ENCODE measurements at regions of chr12 and their contacts with region 1.

Region 1: DNA sequence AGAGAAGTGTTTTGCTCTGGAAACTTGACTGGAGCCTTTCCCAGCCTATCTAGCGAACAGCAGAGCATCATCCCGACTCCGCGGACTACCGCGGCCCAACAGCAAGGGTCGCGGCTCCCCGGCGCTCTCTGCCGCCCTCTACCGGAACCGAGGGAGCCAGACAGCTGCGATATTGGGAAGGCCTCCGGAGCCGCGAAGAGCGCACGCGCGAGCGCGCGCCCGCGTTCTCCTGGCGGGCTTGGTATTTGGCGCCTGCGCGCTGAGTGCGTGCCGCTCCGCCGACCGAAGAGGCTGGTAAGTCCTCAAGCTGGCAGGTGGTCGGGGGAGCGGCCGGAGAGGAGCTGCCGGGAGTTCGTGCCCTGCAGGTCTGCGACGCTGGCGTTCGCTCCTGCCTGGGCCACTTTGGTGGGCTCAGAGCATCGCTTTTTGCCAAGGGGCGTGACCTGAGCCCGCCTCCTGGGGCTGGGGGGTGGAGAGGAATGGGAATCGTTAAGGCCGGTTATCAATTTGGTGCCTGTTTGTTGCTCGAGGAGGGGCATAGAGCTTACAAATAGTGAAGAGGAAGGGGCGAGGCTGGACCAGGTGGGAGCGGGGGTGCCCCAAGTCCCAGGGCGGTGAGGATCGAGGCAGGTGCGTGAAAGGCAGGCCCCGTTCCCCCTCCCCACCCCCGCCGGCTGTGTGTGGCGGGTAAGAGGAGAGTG is at the start of gene TMEM106C:
- DNase-seq: peak; percentile 84 to 97 (median 90)
- ATAC-seq: peak; percentile 97
- H3K4me3 ChIP-seq: peak within 1 kb of the TSS; percentile 85
- H3K4me3 Mint-ChIP-seq: peak within 1 kb of the TSS; percentile 95
- H3K27ac ChIP-seq: no peak within 1 kb of the TSS
- H3K27ac Mint-ChIP-seq: peak within 1 kb of the TSS; percentile 81
- H3K4me1 ChIP-seq: peaks cover 17% of the 10 kb centered on the region
- H3K4me1 Mint-ChIP-seq: peaks cover 38% of the 10 kb centered on the region
- H3K27me3 ChIP-seq: peaks cover 0 to 5% of the 10 kb centered on the region in 2 experiments
- H3K27me3 Mint-ChIP-seq: peaks cover 6% of the 10 kb centered on the region
- CTCF ChIP-seq: peak; percentile 97
- total RNA-seq, gene TMEM106C: 17.4 to 20.3 TPM

Region 2: DNA sequence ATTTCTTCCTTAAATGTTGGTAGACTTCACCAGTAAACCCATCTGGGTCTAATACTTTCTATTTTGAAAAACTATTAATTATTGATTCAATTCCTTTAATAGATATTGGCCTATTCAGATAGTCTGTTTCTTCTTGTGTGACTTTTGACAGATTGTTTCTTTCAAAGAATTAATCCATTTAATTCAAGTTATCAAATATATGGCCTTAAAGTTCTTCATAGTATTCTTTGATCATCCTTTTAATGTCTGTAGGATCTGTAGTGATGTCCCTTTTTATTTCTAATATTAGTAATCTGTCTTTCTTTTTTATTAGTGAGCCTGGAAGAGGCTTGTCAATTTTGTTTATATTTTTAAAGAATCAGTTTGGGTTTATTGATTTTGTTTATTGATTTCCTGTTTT is 1327.7 kb before region 1 on chr12:
- CTCF ChIA-PET with region 1: no interaction called
- POLR2A ChIA-PET with region 1: no interaction called
- intact Hi-C with region 1: no loop called
- DNase-seq: no peak
- ATAC-seq: no peak
- H3K4me3 ChIP-seq: no peak overlapping the region
- H3K4me3 Mint-ChIP-seq: no peak overlapping the region
- H3K27ac ChIP-seq: no peak overlapping the region
- H3K27ac Mint-ChIP-seq: no peak overlapping the region
- H3K4me1 ChIP-seq: no peaks in the 10 kb centered on the region
- H3K4me1 Mint-ChIP-seq: no peaks in the 10 kb centered on the region
- H3K27me3 ChIP-seq: no peaks in the 10 kb centered on the region
- H3K27me3 Mint-ChIP-seq: no peaks in the 10 kb centered on the region
- CTCF ChIP-seq: no peak

Region 3: GRCh38 chr12:47904713-47905310 is 58.7 kb before region 1 on chr12 and contains the start of gene VDR:
- CTCF ChIA-PET with region 1: interaction called, 6 read pairs
- POLR2A ChIA-PET with region 1: interaction called, 8 read pairs
- intact Hi-C with region 1: loop called (anchors 5 kb)
- DNase-seq: peak; percentile 49 to 91 (median 66)
- ATAC-seq: peak; percentile 70
- H3K4me3 ChIP-seq: peak within 1 kb of the TSS; percentile 81
- H3K4me3 Mint-ChIP-seq: peak within 1 kb of the TSS; percentile 95
- H3K27ac ChIP-seq: no peak within 1 kb of the TSS
- H3K27ac Mint-ChIP-seq: peak within 1 kb of the TSS; percentile 55
- H3K4me1 ChIP-seq: peaks cover 59% of the 10 kb centered on the region
- H3K4me1 Mint-ChIP-seq: peaks cover 59% of the 10 kb centered on the region
- H3K27me3 ChIP-seq: no peaks in the 10 kb centered on the region
- H3K27me3 Mint-ChIP-seq: no peaks in the 10 kb centered on the region
- CTCF ChIP-seq: peak; percentile 60
- total RNA-seq, gene VDR: 0.93 to 1.6 TPM

Region 4: DNA sequence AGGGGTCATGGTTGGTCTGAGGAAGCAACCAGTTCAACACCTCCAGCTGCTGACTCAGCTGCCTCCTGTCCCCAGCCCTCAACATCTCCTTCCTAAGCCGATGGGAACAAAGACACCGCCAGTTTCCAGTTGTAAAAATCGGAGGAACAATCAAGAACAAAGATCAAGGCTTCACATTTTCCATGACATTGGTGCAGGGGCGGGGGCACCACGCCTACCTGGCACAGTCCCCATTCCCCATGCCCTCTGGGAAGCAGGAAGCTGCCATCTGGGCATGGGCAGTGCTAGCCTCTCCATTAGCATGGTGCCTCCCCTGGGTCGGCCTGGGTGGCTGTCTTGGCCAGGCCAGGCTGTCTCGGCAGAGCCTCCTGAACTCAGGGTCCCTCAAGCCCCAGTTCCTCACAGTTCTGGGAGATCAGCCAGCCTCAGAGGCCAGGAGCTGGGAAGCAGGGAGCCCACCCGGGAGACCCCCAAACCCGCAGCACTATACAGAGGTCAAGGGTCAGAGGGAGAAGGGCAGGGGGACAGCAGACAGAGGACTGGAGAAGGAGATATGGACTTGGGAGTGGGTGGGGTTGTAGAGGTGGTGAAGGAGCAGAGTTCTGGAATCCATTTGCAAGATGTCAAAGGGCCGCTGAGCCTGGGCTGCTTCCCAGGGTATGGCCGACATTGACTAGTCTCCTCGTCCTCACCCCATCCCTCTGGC is 19.7 kb before region 1 on chr12:
- CTCF ChIA-PET with region 1: no interaction called
- POLR2A ChIA-PET with region 1: no interaction called
- intact Hi-C with region 1: no loop called
- DNase-seq: no peak
- ATAC-seq: no peak
- H3K4me3 ChIP-seq: no peak overlapping the region
- H3K4me3 Mint-ChIP-seq: no peak overlapping the region
- H3K27ac ChIP-seq: no peak overlapping the region
- H3K27ac Mint-ChIP-seq: no peak overlapping the region
- H3K4me1 ChIP-seq: peaks cover 3% of the 10 kb centered on the region
- H3K4me1 Mint-ChIP-seq: no peaks in the 10 kb centered on the region
- H3K27me3 ChIP-seq: peaks cover 4 to 10% of the 10 kb centered on the region in 2 experiments
- H3K27me3 Mint-ChIP-seq: peaks cover 19% of the 10 kb centered on the region
- CTCF ChIP-seq: no peak

Region 5: GRCh38 chr12:48350249-48351021 is 386.9 kb after region 1 on chr12 and contains the start of gene ZNF641:
- CTCF ChIA-PET with region 1: no interaction called
- POLR2A ChIA-PET with region 1: no interaction called
- intact Hi-C with region 1: loop called in 1 of 2 experiments (anchors 10 kb)
- DNase-seq: peak; percentile 68 to 94 (median 80)
- ATAC-seq: peak; percentile 88
- H3K4me3 ChIP-seq: peak within 1 kb of the TSS; percentile 96
- H3K4me3 Mint-ChIP-seq: peak within 1 kb of the TSS; percentile 97
- H3K27ac ChIP-seq: peak within 1 kb of the TSS; percentile 70 to 81
- H3K27ac Mint-ChIP-seq: peak within 1 kb of the TSS; percentile 98
- H3K4me1 ChIP-seq: peaks cover 19% of the 10 kb centered on the region
- H3K4me1 Mint-ChIP-seq: peaks cover 47% of the 10 kb centered on the region
- H3K27me3 ChIP-seq: no peaks in the 10 kb centered on the region
- H3K27me3 Mint-ChIP-seq: no peaks in the 10 kb centered on the region
- CTCF ChIP-seq: no peak
- total RNA-seq, gene ZNF641: 16.6 to 19.8 TPM